Mammary epithelial cell (primary cell): ENCODE measurements at regions of chr20 and their contacts with region 1.

Region 1: DNA sequence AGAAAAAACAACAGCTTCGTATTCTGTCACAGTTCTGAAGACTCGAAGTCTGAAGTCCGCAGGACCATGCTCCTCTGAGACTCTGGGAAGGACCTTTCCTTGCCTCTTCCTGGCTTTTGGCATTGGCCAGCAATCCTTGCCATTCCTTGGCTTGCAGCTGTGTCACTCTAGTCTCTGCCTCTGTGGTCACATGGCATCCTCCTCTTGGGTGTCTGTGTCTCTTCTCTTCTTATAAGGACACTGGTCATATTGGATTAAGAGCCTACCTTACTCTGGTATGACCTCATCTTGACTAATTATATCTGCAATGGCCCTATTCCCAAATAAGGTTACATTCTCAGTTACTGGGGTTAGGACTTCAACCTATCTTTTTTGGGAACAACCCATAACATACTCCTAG is 49.8 kb upstream of the GTSF1L start:
- DNase-seq: no peak
- H3K4me3 ChIP-seq: no peak overlapping the region
- H3K27ac ChIP-seq: no peak overlapping the region
- H3K4me1 ChIP-seq: peaks cover under 1% of the 10 kb centered on the region
- H3K27me3 ChIP-seq: no peaks in the 10 kb centered on the region
- CTCF ChIP-seq: no peak

Region 2: DNA sequence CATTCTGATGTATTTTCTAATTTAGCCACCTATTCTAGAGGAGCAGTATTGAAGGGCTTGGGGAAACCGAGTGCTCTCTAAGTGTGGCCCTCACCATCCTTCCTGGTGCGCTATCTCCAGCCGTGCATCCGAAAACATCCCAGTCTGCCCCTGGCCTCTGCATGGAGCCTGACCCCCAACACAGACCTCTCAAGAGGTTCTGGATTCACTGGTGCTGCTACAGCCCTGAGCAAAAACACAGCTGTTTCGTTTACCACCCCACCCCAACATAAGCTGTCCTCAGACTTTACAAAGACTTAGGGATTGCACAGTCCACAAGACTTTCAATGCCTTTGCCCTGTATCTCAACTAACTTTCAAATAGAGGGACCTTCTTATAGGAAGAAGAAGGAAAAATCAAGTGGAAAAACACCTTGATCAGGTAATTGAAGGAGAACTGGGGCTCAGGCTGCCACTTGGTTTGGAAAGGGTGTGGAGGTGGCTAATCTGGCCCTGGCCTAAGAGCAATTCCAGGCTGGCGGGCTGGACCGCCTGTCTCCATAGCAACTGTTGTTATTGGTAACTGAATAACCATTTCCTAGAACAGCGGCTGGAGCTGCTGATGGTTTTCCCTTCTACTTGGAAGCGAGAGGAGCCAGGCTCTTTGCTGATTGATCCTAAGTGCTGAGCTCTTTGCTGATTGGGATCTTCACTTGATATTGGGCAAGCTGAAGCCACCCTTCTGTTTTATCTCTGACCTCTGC is 47.8 kb after region 1 on chr20:
- CTCF ChIA-PET with region 1: no interaction called
- dilution Hi-C with region 1: no loop called
- in situ Hi-C with region 1: no loop called
- intact Hi-C with region 1: loop called (anchors 5 kb)
- DNase-seq: peak; percentile 26
- H3K4me3 ChIP-seq: no peak overlapping the region
- H3K27ac ChIP-seq: no peak overlapping the region
- H3K4me1 ChIP-seq: peaks cover 13% of the 10 kb centered on the region
- H3K27me3 ChIP-seq: no peaks in the 10 kb centered on the region
- CTCF ChIP-seq: no peak